ENCODE measurements at regions of chr14 and their contacts with region 1.

Region 1: GRCh38 chr14:37874429-37875191 is 279.2 kb downstream of the TTC6 start:
- DNase-seq: peak; percentile 80 to 90
- H3K4me3 ChIP-seq: no peak overlapping the region
- H3K4me3 Mint-ChIP-seq: peak overlapping the region; percentile 9
- H3K27ac Mint-ChIP-seq: peak overlapping the region; percentile 36
- H3K4me1 ChIP-seq: peaks cover 9% of the 10 kb centered on the region; the same call in 1 of the 2 replicates
- H3K4me1 Mint-ChIP-seq: peaks cover 21% of the 10 kb centered on the region
- H3K27me3 ChIP-seq: no peaks in the 10 kb centered on the region
- H3K27me3 Mint-ChIP-seq: no peaks in the 10 kb centered on the region
- CTCF ChIP-seq: peak; percentile 83 to 87

Region 2: GRCh38 chr14:37230551-37231194 is 643.9 kb before region 1 on chr14:
- CTCF ChIA-PET with region 1: interaction called, 3 read pairs
- POLR2A ChIA-PET with region 1: no interaction called
- intact Hi-C with region 1: loop called (anchors 1 kb)
- DNase-seq: peak in 1 of 2 experiments; percentile 54
- H3K4me3 ChIP-seq: no peak overlapping the region
- H3K4me3 Mint-ChIP-seq: no peak overlapping the region
- H3K27ac Mint-ChIP-seq: no peak overlapping the region
- H3K4me1 ChIP-seq: 0 out of 2 replicates have a peak, but pooled peaks cover 7% of the 10 kb centered on the region
- H3K4me1 Mint-ChIP-seq: no peaks in the 10 kb centered on the region
- H3K27me3 ChIP-seq: no peaks in the 10 kb centered on the region
- H3K27me3 Mint-ChIP-seq: no peaks in the 10 kb centered on the region
- CTCF ChIP-seq: peak; percentile 57 to 84

Region 3: GRCh38 chr14:37253905-37254304 is 620.7 kb before region 1 on chr14:
- CTCF ChIA-PET with region 1: no interaction called
- POLR2A ChIA-PET with region 1: no interaction called
- intact Hi-C with region 1: loop called (anchors 1 kb)
- DNase-seq: no peak
- H3K4me3 ChIP-seq: no peak overlapping the region
- H3K4me3 Mint-ChIP-seq: no peak overlapping the region
- H3K27ac Mint-ChIP-seq: no peak overlapping the region
- H3K4me1 ChIP-seq: peaks cover 35% of the 10 kb centered on the region
- H3K4me1 Mint-ChIP-seq: peaks cover 18% of the 10 kb centered on the region
- H3K27me3 ChIP-seq: no peaks in the 10 kb centered on the region
- H3K27me3 Mint-ChIP-seq: no peaks in the 10 kb centered on the region
- CTCF ChIP-seq: no peak

Region 4: GRCh38 chr14:37709419-37710195 is 165.0 kb before region 1 on chr14:
- CTCF ChIA-PET with region 1: interaction called, 20 read pairs
- POLR2A ChIA-PET with region 1: no interaction called
- intact Hi-C with region 1: loop called (anchors 1 kb)
- DNase-seq: no peak
- H3K4me3 ChIP-seq: no peak overlapping the region
- H3K4me3 Mint-ChIP-seq: no peak overlapping the region
- H3K27ac Mint-ChIP-seq: no peak overlapping the region
- H3K4me1 ChIP-seq: 0 out of 2 replicates have a peak, but pooled peaks cover 4% of the 10 kb centered on the region
- H3K4me1 Mint-ChIP-seq: no peaks in the 10 kb centered on the region
- H3K27me3 ChIP-seq: no peaks in the 10 kb centered on the region
- H3K27me3 Mint-ChIP-seq: no peaks in the 10 kb centered on the region
- CTCF ChIP-seq: peak; percentile 38

Region 5: DNA sequence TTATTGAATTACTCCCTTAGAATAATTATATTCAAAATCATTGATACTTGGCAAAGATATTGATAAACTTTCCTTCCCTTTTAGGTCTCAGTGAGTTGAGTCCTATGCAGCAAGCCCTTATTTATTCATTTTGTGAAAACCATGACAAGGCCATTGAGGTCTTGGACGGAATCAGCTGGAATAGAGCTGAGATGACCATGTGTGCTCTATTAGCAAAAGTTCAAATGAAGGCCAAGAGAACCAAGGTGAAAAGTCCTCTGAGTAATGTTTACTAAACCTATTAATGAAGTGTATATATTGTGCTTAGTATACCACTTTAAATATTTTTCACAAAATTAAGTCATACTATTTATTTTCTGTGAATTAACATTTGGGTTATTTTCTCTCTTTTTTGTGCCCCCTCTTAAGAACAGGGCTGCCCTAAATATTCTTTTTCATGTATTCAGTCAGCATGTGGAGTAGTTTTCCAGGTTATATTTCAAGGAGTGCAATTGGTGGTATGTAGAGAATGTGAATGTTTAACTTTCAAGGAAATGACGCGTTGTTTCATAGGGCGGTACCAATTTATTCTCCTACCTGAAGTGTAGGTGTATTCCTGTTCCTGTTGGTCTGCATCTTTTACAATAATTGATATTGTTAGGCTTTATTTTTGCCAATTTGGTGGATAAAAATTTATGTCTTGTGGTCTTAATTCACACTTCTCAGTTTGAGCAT is 77.8 kb before region 1 on chr14:
- CTCF ChIA-PET with region 1: no interaction called
- POLR2A ChIA-PET with region 1: no interaction called
- intact Hi-C with region 1: loop called (anchors 5 kb)
- DNase-seq: peak in 1 of 2 experiments; percentile 9
- H3K4me3 ChIP-seq: no peak overlapping the region
- H3K4me3 Mint-ChIP-seq: no peak overlapping the region
- H3K27ac Mint-ChIP-seq: no peak overlapping the region
- H3K4me1 ChIP-seq: peaks cover 7% of the 10 kb centered on the region; the same call in 1 of the 2 replicates
- H3K4me1 Mint-ChIP-seq: no peaks in the 10 kb centered on the region
- H3K27me3 ChIP-seq: no peaks in the 10 kb centered on the region
- H3K27me3 Mint-ChIP-seq: no peaks in the 10 kb centered on the region
- CTCF ChIP-seq: no peak

Region 6: GRCh38 chr14:37810094-37810801 is 64.4 kb before region 1 on chr14:
- CTCF ChIA-PET with region 1: no interaction called
- POLR2A ChIA-PET with region 1: no interaction called
- intact Hi-C with region 1: loop called (anchors 2 kb)
- DNase-seq: peak; percentile 36 to 69
- H3K4me3 ChIP-seq: no peak overlapping the region
- H3K4me3 Mint-ChIP-seq: peak overlapping the region; percentile 8
- H3K27ac Mint-ChIP-seq: peak overlapping the region; percentile 64
- H3K4me1 ChIP-seq: peaks cover 20% of the 10 kb centered on the region
- H3K4me1 Mint-ChIP-seq: peaks cover 16% of the 10 kb centered on the region
- H3K27me3 ChIP-seq: no peaks in the 10 kb centered on the region
- H3K27me3 Mint-ChIP-seq: no peaks in the 10 kb centered on the region
- CTCF ChIP-seq: no peak